Mammary epithelial cell (primary cell): ENCODE measurements at regions of chr2 and their contacts with region 1.

Region 1: DNA sequence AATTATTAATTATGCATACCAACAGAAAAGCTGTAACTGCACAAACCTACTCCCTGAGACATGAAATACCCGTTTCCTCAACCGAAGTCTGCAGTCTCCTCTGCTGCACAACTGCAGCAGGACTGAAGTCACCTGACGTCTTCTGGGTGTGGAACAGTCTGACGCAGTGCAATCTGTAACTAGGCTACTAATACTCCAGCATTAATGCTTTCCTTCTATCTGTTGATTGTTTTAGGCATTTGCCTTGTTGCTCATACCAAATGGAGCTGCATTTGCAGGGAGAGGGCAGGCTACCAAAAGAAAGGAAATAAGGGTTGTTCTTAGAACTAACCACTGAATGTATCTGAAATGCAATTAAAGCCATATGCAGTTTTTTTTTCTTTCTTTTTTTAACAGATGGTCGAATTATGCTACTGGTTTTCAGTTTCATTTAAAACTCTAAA is 40.1 kb downstream of the RTN4 start:
- DNase-seq: peak; percentile 85
- H3K4me3 ChIP-seq: peak overlapping the region; percentile 46 to 52 (median 50)
- H3K27ac ChIP-seq: peak overlapping the region; percentile 85
- H3K4me1 ChIP-seq: peaks cover 63% of the 10 kb centered on the region
- H3K27me3 ChIP-seq: no peaks in the 10 kb centered on the region
- CTCF ChIP-seq: no peak

Region 2: DNA sequence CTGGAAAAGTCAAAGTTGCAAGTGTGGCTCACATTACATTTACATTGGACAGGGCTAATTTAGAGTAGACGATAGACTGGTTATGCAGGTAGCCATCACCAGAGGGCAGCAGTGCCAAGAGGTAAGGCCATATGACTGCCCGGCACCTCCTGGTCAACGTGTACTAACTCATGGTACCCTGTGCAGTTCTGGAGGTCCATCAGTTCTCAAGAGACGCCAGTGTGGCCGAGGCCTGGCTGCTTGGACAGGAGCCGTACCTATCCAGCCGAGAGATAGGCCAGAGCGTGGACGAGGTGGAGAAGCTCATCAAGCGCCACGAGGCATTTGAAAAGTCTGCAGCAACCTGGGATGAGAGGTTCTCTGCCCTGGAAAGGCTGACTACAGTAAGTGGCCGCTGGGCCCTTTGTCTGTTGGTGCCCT is 352.5 kb before region 1 on chr2:
- CTCF ChIA-PET with region 1: no interaction called
- dilution Hi-C with region 1: no loop called
- in situ Hi-C with region 1: no loop called
- intact Hi-C with region 1: no loop called
- DNase-seq: no peak
- H3K4me3 ChIP-seq: no peak overlapping the region
- H3K27ac ChIP-seq: no peak overlapping the region
- H3K4me1 ChIP-seq: no peaks in the 10 kb centered on the region
- H3K27me3 ChIP-seq: no peaks in the 10 kb centered on the region
- CTCF ChIP-seq: peak; percentile 44 to 63

Region 3: GRCh38 chr2:54723131-54723995 is 286.8 kb before region 1 on chr2 and contains the start of gene EML6:
- CTCF ChIA-PET with region 1: no interaction called
- dilution Hi-C with region 1: no loop called
- in situ Hi-C with region 1: no loop called
- intact Hi-C with region 1: loop called (anchors 10 kb)
- DNase-seq: peak; percentile 99
- H3K4me3 ChIP-seq: peak within 1 kb of the TSS; percentile 79 to 88 (median 82)
- H3K27ac ChIP-seq: peak within 1 kb of the TSS; percentile 89
- H3K4me1 ChIP-seq: peaks cover 27% of the 10 kb centered on the region
- H3K27me3 ChIP-seq: no peaks in the 10 kb centered on the region
- CTCF ChIP-seq: peak in 1 of 2 donors; percentile 27
- total RNA-seq, gene EML6: 0.83 to 0.94 TPM

Region 4: GRCh38 chr2:54773838-54774237 is 236.3 kb before region 1 on chr2:
- CTCF ChIA-PET with region 1: no interaction called
- dilution Hi-C with region 1: no loop called
- in situ Hi-C with region 1: no loop called
- intact Hi-C with region 1: loop called (anchors 5 kb)
- DNase-seq: no peak
- H3K4me3 ChIP-seq: no peak overlapping the region
- H3K27ac ChIP-seq: no peak overlapping the region
- H3K4me1 ChIP-seq: peaks cover 30% of the 10 kb centered on the region
- H3K27me3 ChIP-seq: no peaks in the 10 kb centered on the region
- CTCF ChIP-seq: peak in 1 of 2 donors; percentile 26

Region 5: GRCh38 chr2:54977149-54977548 is 33.0 kb before region 1 on chr2:
- CTCF ChIA-PET with region 1: no interaction called
- dilution Hi-C with region 1: no loop called
- in situ Hi-C with region 1: no loop called
- intact Hi-C with region 1: loop called (anchors 5 kb)
- DNase-seq: no peak
- H3K4me3 ChIP-seq: no peak overlapping the region
- H3K27ac ChIP-seq: no peak overlapping the region
- H3K4me1 ChIP-seq: peaks cover 14% of the 10 kb centered on the region
- H3K27me3 ChIP-seq: no peaks in the 10 kb centered on the region
- CTCF ChIP-seq: no peak